Activated CD8-positive, alpha-beta T cell treated with anti-CD3 and anti-CD28 coated beads for 36 hours (primary cell): ENCODE measurements at regions of chr2 and their contacts with region 1.

Region 1: DNA sequence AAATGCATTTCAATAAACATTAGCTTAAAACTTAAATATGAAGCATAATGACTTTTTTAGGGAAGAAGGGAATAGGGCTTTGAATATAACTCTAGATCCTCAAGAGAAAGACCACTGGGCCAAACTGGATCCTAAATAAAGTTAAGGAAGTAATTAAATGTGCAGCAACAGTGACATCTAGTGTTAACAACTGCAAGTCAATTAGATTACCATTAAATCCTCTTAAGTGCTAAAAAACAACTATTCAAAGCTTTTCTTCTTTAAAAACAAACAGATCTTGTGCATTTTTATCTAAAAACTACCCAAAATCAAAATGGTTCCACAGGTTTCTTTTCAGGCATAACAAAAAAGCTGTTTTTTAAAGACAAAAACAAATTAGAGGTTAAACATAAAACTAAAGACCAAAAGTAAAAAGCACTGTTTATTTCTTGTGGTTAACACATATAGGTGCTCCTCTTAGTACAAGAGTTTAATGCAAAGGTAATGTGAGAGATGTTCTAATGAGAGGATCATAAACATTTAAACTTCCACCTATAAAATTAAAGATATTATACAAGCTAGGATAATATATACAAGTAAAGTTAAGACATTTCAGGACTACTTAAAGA is 111.4 kb downstream of the THADA start:
- DNase-seq: no peak
- ATAC-seq: peak; percentile 61
- H3K4me3 Mint-ChIP-seq: no peak overlapping the region
- H3K27ac Mint-ChIP-seq: no peak overlapping the region
- H3K4me1 Mint-ChIP-seq: peaks cover 6% of the 10 kb centered on the region
- H3K27me3 Mint-ChIP-seq: no peaks in the 10 kb centered on the region
- CTCF ChIP-seq: peak; percentile 82

Region 2: DNA sequence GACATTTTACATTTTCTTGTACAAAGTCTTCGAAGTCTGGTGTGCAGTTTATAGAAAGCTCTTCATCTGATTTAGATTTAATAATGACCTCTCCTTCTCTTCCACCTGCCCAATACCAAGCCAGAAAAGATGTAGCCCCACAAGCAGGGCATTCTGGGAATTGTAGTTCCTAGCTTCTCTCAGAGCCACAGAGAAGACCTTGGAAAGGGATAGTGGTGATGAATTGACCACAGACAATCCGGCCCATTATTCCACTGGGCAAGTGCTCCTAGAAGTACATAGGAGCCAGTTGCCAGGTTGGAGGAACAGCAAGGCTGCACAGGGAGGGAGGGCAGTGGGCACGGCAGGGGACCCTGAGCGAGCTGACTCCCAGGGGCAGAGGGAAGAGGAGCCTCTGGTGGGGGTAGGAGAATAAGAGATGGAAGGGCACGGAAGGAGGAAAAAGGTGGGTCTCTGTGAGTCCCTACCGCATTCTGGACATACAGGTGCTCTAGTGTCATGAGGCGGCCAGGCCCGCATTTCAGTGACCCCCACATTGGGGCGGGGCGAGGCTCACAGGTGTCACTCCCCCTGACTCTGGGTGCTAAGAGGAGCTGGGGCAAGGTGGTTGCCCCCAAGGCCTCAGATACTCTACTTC is 539.5 kb before region 1 on chr2:
- CTCF ChIA-PET with region 1: interaction called, 32 read pairs
- POLR2A ChIA-PET with region 1: no interaction called
- intact Hi-C with region 1: loop called (anchors 10 kb)
- DNase-seq: no peak
- ATAC-seq: no peak
- H3K4me3 Mint-ChIP-seq: no peak overlapping the region
- H3K27ac Mint-ChIP-seq: no peak overlapping the region
- H3K4me1 Mint-ChIP-seq: peaks cover 2% of the 10 kb centered on the region
- H3K27me3 Mint-ChIP-seq: no peaks in the 10 kb centered on the region
- CTCF ChIP-seq: no peak

Region 3: GRCh38 chr2:42974721-42975717 is 509.4 kb before region 1 on chr2:
- CTCF ChIA-PET with region 1: interaction called, 15 read pairs
- POLR2A ChIA-PET with region 1: no interaction called
- intact Hi-C with region 1: no loop called
- DNase-seq: peak; percentile 64
- ATAC-seq: peak; percentile 75
- H3K4me3 Mint-ChIP-seq: no peak overlapping the region
- H3K27ac Mint-ChIP-seq: no peak overlapping the region
- H3K4me1 Mint-ChIP-seq: peaks cover 16% of the 10 kb centered on the region
- H3K27me3 Mint-ChIP-seq: no peaks in the 10 kb centered on the region
- CTCF ChIP-seq: peak; percentile 85

Region 4: GRCh38 chr2:43239981-43240761 is 244.3 kb before region 1 on chr2:
- CTCF ChIA-PET with region 1: interaction called, 17 read pairs
- POLR2A ChIA-PET with region 1: no interaction called
- intact Hi-C with region 1: no loop called
- DNase-seq: no peak
- ATAC-seq: no peak
- H3K4me3 Mint-ChIP-seq: no peak overlapping the region
- H3K27ac Mint-ChIP-seq: no peak overlapping the region
- H3K4me1 Mint-ChIP-seq: peaks cover 10% of the 10 kb centered on the region
- H3K27me3 Mint-ChIP-seq: no peaks in the 10 kb centered on the region
- CTCF ChIP-seq: no peak

Region 5: GRCh38 chr2:43246641-43247040 is 237.8 kb before region 1 on chr2:
- CTCF ChIA-PET with region 1: interaction called, 17 read pairs
- POLR2A ChIA-PET with region 1: no interaction called
- intact Hi-C with region 1: no loop called
- DNase-seq: no peak
- ATAC-seq: no peak
- H3K4me3 Mint-ChIP-seq: no peak overlapping the region
- H3K27ac Mint-ChIP-seq: no peak overlapping the region
- H3K4me1 Mint-ChIP-seq: no peaks in the 10 kb centered on the region
- H3K27me3 Mint-ChIP-seq: no peaks in the 10 kb centered on the region
- CTCF ChIP-seq: no peak

Region 6: DNA sequence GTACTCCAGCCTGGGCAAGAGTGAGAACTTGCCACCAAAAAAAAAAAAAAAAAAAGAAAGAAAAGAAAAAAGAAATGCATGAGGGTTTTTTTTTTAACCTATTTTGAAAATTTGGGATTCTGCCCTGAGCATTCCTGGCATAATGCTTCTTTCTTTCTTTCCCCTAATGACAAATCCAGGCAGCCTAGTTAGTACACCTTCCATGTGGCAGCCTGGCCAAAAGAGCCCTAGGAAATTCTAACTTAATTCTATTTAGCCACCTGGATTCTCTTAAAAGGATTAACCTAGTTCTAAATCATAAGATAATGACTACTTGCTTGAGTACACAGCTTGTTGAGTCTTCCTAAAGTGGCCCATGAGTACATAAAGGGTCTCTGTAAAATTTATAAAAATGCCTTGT is 48.7 kb before region 1 on chr2:
- CTCF ChIA-PET with region 1: no interaction called
- POLR2A ChIA-PET with region 1: no interaction called
- intact Hi-C with region 1: no loop called
- DNase-seq: no peak
- ATAC-seq: no peak
- H3K4me3 Mint-ChIP-seq: no peak overlapping the region
- H3K27ac Mint-ChIP-seq: no peak overlapping the region
- H3K4me1 Mint-ChIP-seq: peaks cover 2% of the 10 kb centered on the region
- H3K27me3 Mint-ChIP-seq: no peaks in the 10 kb centered on the region
- CTCF ChIP-seq: no peak

Region 7: GRCh38 chr2:43495727-43496126 is 11.3 kb after region 1 on chr2:
- CTCF ChIA-PET with region 1: interaction called, 11 read pairs
- POLR2A ChIA-PET with region 1: no interaction called
- intact Hi-C with region 1: no loop called
- DNase-seq: no peak
- ATAC-seq: no peak
- H3K4me3 Mint-ChIP-seq: no peak overlapping the region
- H3K27ac Mint-ChIP-seq: no peak overlapping the region
- H3K4me1 Mint-ChIP-seq: no peaks in the 10 kb centered on the region
- H3K27me3 Mint-ChIP-seq: no peaks in the 10 kb centered on the region
- CTCF ChIP-seq: no peak